ENCODE measurements at regions of chr13 and their contacts with region 1.

Region 1: GRCh38 chr13:99614385-99614885 is 113.2 kb downstream of the TM9SF2 start:
- DNase-seq: peak in 3 of 9 experiments; percentile 22 to 60 (median 46)
- ATAC-seq: peak; percentile 73
- H3K4me3 ChIP-seq: no peak overlapping the region
- H3K4me3 Mint-ChIP-seq: no peak overlapping the region
- H3K27ac ChIP-seq: no peak overlapping the region
- H3K27ac Mint-ChIP-seq: no peak overlapping the region
- H3K4me1 ChIP-seq: peaks cover 9% of the 10 kb centered on the region
- H3K4me1 Mint-ChIP-seq: peaks cover 41% of the 10 kb centered on the region
- H3K27me3 ChIP-seq: no peaks in the 10 kb centered on the region
- H3K27me3 Mint-ChIP-seq: no peaks in the 10 kb centered on the region
- CTCF ChIP-seq: no peak

Region 2: GRCh38 chr13:99442273-99442895 is 172.1 kb before region 1 on chr13:
- CTCF ChIA-PET with region 1: interaction called, 5 read pairs
- POLR2A ChIA-PET with region 1: no interaction called
- intact Hi-C with region 1: loop called in 1 of 2 experiments (anchors 5 kb)
- DNase-seq: peak in 7 of 9 experiments; percentile 40 to 78 (median 59)
- ATAC-seq: peak; percentile 92
- H3K4me3 ChIP-seq: no peak overlapping the region
- H3K4me3 Mint-ChIP-seq: no peak overlapping the region
- H3K27ac ChIP-seq: no peak overlapping the region
- H3K27ac Mint-ChIP-seq: no peak overlapping the region
- H3K4me1 ChIP-seq: peaks cover 4% of the 10 kb centered on the region
- H3K4me1 Mint-ChIP-seq: peaks cover 5% of the 10 kb centered on the region
- H3K27me3 ChIP-seq: no peaks in the 10 kb centered on the region
- H3K27me3 Mint-ChIP-seq: no peaks in the 10 kb centered on the region
- CTCF ChIP-seq: peak; percentile 99

Region 3: DNA sequence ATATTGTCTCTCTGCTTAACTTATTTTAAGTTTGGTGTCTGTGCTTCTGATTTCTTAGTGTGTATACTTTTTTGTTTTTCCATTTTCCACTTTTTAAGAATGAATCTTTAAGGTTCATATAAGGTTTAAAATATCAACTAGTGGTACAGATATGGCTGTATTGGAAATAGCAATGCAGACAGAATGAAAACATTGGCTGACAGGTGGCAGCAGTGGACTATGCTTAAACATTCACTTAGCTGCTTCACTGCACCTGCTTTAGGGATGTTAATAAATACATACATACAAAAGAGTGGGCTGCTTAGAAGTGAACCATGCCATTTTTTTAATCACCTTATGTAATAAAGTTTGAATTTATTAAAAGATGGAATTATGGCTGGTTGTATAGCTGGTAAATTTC is 85.9 kb before region 1 on chr13:
- CTCF ChIA-PET with region 1: interaction called, 5 read pairs
- POLR2A ChIA-PET with region 1: no interaction called
- intact Hi-C with region 1: loop called in 1 of 2 experiments (anchors 1 kb)
- DNase-seq: peak in 4 of 9 experiments; percentile 13 to 59 (median 36)
- ATAC-seq: peak; percentile 46
- H3K4me3 ChIP-seq: no peak overlapping the region
- H3K4me3 Mint-ChIP-seq: no peak overlapping the region
- H3K27ac ChIP-seq: no peak overlapping the region
- H3K27ac Mint-ChIP-seq: no peak overlapping the region
- H3K4me1 ChIP-seq: peaks cover 12% of the 10 kb centered on the region
- H3K4me1 Mint-ChIP-seq: peaks cover 46% of the 10 kb centered on the region
- H3K27me3 ChIP-seq: no peaks in the 10 kb centered on the region
- H3K27me3 Mint-ChIP-seq: no peaks in the 10 kb centered on the region
- CTCF ChIP-seq: peak; percentile 32

Region 4: GRCh38 chr13:99600318-99600717 is 14.1 kb before region 1 on chr13:
- CTCF ChIA-PET with region 1: interaction called, 3 read pairs
- POLR2A ChIA-PET with region 1: no interaction called
- intact Hi-C with region 1: loop called in 1 of 2 experiments (anchors 2 kb)
- DNase-seq: peak in 3 of 9 experiments; percentile 15 to 56 (median 35)
- ATAC-seq: peak; percentile 67
- H3K4me3 ChIP-seq: no peak overlapping the region
- H3K4me3 Mint-ChIP-seq: no peak overlapping the region
- H3K27ac ChIP-seq: no peak overlapping the region
- H3K27ac Mint-ChIP-seq: peak overlapping the region; percentile 69
- H3K4me1 ChIP-seq: peaks cover 20% of the 10 kb centered on the region
- H3K4me1 Mint-ChIP-seq: peaks cover 29% of the 10 kb centered on the region
- H3K27me3 ChIP-seq: no peaks in the 10 kb centered on the region
- H3K27me3 Mint-ChIP-seq: no peaks in the 10 kb centered on the region
- CTCF ChIP-seq: peak; percentile 29

Region 5: DNA sequence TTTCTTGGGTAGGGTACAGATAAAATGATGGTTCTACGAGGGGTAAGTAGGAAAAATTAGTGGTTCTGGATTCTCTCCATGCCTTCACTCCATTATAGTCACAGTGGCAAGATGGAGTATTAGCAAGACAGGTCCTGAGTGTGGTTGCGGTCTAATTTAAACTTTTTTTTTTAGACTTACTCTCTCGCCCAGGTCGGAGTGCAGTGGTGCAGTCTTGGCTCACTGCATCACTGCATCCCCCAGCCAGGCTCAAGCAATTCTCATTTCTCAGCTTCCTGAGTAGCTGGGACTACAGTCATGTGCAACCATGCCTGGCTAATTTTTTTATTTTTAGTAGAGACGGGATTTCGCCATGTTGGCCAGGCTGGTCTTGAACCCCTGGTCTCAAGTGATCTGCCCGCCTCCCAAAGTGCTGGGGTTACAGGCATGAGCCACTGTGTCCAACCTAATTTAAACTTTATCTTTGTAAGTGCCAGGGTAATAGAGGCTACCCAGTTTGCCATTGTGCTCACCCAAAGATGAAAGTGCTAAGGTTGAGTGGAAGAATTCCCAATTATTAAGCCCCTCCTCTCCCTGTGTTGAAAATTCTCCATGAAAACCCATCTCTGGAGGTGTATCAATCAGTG is 22.4 kb after region 1 on chr13:
- CTCF ChIA-PET with region 1: no interaction called
- POLR2A ChIA-PET with region 1: no interaction called
- intact Hi-C with region 1: no loop called
- DNase-seq: no peak
- ATAC-seq: no peak
- H3K4me3 ChIP-seq: no peak overlapping the region
- H3K4me3 Mint-ChIP-seq: no peak overlapping the region
- H3K27ac ChIP-seq: no peak overlapping the region
- H3K27ac Mint-ChIP-seq: no peak overlapping the region
- H3K4me1 ChIP-seq: no peaks in the 10 kb centered on the region
- H3K4me1 Mint-ChIP-seq: no peaks in the 10 kb centered on the region
- H3K27me3 ChIP-seq: no peaks in the 10 kb centered on the region
- H3K27me3 Mint-ChIP-seq: no peaks in the 10 kb centered on the region
- CTCF ChIP-seq: no peak

Region 6: DNA sequence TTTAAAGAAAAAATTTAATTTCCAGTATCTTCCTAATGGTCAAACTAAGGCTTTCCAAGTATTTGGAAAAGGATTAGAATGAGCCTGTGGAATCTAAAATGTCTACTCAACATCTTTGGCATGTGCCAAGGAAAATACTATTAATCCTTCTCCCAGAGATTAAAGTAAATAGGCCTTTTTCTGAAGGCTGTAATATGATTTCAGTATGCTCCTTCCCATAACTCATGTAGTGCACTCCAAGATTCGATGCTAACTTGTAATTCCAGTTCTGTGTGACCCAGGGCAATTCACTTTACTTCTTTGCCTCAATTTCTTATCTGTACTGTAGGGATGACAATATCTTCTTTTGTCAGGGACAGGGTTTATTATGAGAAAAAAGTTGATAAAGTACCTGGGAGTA is 160.2 kb after region 1 on chr13:
- CTCF ChIA-PET with region 1: no interaction called
- POLR2A ChIA-PET with region 1: no interaction called
- intact Hi-C with region 1: no loop called
- DNase-seq: no peak
- ATAC-seq: no peak
- H3K4me3 ChIP-seq: no peak overlapping the region
- H3K4me3 Mint-ChIP-seq: no peak overlapping the region
- H3K27ac ChIP-seq: no peak overlapping the region
- H3K27ac Mint-ChIP-seq: no peak overlapping the region
- H3K4me1 ChIP-seq: no peaks in the 10 kb centered on the region
- H3K4me1 Mint-ChIP-seq: no peaks in the 10 kb centered on the region
- H3K27me3 ChIP-seq: no peaks in the 10 kb centered on the region
- H3K27me3 Mint-ChIP-seq: no peaks in the 10 kb centered on the region
- CTCF ChIP-seq: no peak

Region 7: GRCh38 chr13:99908140-99908803 is 293.8 kb after region 1 on chr13:
- CTCF ChIA-PET with region 1: no interaction called
- POLR2A ChIA-PET with region 1: no interaction called
- intact Hi-C with region 1: no loop called
- DNase-seq: no peak
- ATAC-seq: no peak
- H3K4me3 ChIP-seq: no peak overlapping the region
- H3K4me3 Mint-ChIP-seq: no peak overlapping the region
- H3K27ac ChIP-seq: no peak overlapping the region
- H3K27ac Mint-ChIP-seq: no peak overlapping the region
- H3K4me1 ChIP-seq: no peaks in the 10 kb centered on the region
- H3K4me1 Mint-ChIP-seq: peaks cover 6% of the 10 kb centered on the region
- H3K27me3 ChIP-seq: peaks cover 0 to 2% of the 10 kb centered on the region in 2 experiments
- H3K27me3 Mint-ChIP-seq: peaks cover 46% of the 10 kb centered on the region
- CTCF ChIP-seq: no peak